Spleen (tissue), 13 donors: ENCODE measurements at regions of chr9 and their contacts with region 1.

Region 1: DNA sequence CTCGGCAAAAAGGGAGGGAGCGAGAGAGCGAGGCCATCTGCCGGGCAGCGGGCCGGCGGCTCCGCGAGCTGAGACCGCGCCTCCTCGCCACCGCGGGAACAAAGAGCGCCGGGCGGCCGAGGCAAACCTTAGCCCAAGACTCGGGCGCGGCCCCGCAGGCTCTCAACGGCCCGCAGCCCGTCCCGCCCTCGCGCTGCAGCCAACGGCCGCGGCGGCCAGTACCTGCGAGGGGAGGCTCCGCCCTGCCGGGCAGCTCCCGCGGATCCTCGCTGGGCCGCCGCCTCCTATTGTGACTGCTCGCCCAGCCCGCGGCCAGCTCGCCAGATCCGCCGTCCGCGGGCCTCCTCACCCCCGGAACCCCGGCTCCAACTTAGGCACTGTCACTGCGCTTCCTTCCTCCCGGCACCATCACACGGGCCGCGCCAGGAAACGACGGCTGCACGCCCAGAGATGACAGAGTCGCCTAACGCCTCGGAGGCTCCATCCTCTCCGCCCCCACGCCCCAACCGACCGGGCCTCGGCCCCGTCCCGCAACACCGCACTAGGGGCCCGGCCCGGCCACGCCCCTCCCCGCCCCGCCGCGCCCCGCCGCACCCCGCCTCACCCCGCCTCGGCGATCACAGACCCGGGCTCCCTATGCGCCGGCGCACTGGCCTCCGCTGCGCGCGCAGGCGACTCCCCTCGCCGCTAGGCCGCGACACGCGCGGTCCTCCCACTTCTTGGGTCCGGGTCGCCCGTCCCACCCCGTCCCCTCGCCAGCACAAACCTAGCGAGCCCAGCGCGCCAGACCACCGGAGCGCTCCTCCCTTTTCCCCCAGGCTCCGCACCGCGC is 479 bp upstream of the RNF38 start:
- DNase-seq: peak; percentile 97
- H3K4me3 ChIP-seq: peak overlapping the region; percentile 52 to 95 (median 78)
- H3K27ac ChIP-seq: peak overlapping the region; percentile 93 to 100 (median 98)
- H3K4me1 ChIP-seq: peaks cover 8 to 61% (median 40%) of the 10 kb centered on the region in 6 donors
- H3K27me3 ChIP-seq: no peaks in the 10 kb centered on the region
- CTCF ChIP-seq: peak in 5 of 11 experiments; percentile 14 to 39 (median 33)
- POLR2A ChIP-seq: peak in 2 of 3 donors; percentile 2 to 27

Region 2: GRCh38 chr9:36306471-36307306 is 93.9 kb before region 1 on chr9:
- intact Hi-C with region 1: no loop called
- DNase-seq: no peak
- H3K4me3 ChIP-seq: no peak overlapping the region
- H3K27ac ChIP-seq: no peak overlapping the region
- H3K4me1 ChIP-seq: peaks cover 0 to 11% (median 6%) of the 10 kb centered on the region in 6 donors
- H3K27me3 ChIP-seq: no peaks in the 10 kb centered on the region
- CTCF ChIP-seq: no peak
- POLR2A ChIP-seq: no peak

Region 3: DNA sequence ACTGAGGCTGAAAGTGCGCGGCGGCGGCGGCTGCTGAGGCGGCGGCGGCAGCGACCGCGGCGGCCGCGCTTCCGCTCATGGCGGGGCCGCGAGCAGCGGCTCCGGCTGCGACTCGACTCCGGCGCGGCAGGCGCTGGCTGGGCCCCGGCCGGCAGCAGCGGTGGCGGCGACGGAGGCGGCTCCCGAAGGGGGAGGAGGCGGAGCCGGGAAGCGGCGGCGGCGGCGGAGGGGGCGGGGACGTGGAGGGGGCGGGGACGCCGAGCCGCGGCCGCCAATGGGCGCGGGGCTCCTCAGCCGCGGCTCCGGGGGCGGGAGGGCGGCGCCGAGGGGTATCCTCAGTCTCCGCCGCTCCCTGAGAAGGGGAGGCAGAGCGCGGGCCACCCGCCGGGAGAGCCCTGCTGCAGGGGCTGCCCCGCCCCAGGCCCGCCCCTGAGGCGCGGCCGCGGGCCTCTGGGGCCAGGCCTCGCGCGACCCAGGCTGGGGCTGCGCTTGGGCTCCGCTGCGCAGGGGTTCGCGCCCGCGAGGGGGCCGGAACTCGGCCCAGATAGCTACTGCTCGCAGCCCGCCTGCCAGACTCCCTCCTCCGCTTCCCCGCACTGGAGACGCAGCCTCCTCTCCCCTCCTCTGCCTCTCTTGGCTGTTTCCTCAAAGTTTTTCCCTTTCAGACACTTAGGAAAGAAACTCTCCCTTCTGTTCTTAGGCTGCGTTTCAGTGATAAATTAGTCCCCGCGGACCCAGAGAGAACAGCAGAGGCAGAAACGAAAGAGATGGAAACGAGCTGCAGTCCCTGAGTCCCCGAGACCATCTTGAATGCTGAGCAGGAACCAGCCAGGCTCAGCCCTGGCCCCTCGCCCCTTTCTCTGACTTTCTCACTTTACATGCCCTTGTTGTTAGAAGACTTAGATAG is 87.2 kb after region 1 on chr9:
- intact Hi-C with region 1: loop called (anchors 10 kb)
- DNase-seq: peak; percentile 98
- H3K4me3 ChIP-seq: peak overlapping the region; percentile 33 to 98 (median 76)
- H3K27ac ChIP-seq: peak overlapping the region; percentile 93 to 98 (median 95)
- H3K4me1 ChIP-seq: peaks cover 17 to 65% (median 46%) of the 10 kb centered on the region in 6 donors
- H3K27me3 ChIP-seq: no peaks in the 10 kb centered on the region
- CTCF ChIP-seq: peak in 7 of 11 experiments; percentile 2 to 55 (median 37)
- POLR2A ChIP-seq: peak; percentile 40 to 89 (median 79)